ENCODE measurements at regions of chr6 and their contacts with region 1.

Region 1: GRCh38 chr6:132813173-132813856 is 1.1 kb upstream of the RPS12 start:
- DNase-seq: peak; percentile 67
- H3K4me3 Mint-ChIP-seq: peak overlapping the region; percentile 96
- H3K27ac Mint-ChIP-seq: peak overlapping the region; percentile 99
- H3K4me1 Mint-ChIP-seq: peaks cover 25% of the 10 kb centered on the region
- H3K27me3 Mint-ChIP-seq: no peaks in the 10 kb centered on the region
- CTCF ChIP-seq: no peak

Region 2: DNA sequence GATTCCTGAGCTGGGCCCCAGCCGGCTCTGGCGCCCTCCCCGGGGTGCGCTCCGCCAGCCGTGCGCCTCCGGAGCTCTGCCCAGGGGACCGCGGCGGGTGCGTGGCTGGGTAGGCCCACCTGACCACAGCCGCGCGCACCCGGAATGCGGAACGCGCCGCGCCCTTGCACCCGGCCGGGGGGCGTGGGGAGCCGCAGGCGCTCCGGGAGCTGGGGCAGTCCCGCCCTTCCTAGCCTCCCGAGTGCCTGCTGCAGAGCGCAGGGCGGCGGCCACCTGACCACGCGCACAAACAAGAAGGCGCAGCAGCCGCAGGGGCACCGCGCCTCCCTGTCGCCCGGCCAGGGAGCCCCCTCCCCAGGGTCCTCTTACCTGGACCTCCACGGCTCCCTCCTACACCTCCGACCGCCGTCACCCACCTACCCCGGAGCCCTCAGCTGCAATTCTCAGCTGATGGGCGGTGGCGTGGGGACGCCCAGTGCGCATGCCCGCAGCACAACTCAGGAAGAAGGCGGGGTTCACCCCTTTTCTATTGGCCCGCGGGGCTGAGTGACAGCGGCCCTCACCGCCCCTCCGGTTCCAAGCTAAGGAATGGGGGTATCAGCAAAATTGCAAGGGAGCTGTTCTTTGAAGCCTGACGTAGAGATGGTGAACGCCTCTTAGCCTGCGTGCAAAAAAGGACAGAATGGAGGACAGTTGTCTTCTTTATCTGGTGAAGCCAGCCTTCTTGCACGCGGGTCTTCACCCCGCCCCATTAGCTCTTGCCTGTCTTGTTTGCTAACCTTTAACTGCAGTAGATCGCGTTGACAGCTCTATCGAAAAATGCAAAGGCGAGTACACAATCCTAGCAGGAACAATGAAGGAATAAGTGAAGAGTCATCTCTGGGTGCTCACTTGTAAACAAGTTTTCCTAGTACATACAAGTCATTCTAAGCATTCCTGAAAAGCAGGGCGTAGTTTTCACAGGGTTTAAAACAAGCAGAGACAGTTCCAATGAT is 300.4 kb before region 1 on chr6 and contains the start of gene STX7:
- CTCF ChIA-PET with region 1: no interaction called
- POLR2A ChIA-PET with region 1: interaction called, 66 read pairs
- intact Hi-C with region 1: no loop called
- DNase-seq: peak; percentile 90
- H3K4me3 Mint-ChIP-seq: peak within 1 kb of the TSS; percentile 92
- H3K27ac Mint-ChIP-seq: peak within 1 kb of the TSS; percentile 82
- H3K4me1 Mint-ChIP-seq: peaks cover 27% of the 10 kb centered on the region
- H3K27me3 Mint-ChIP-seq: no peaks in the 10 kb centered on the region
- CTCF ChIP-seq: no peak
- total RNA-seq, gene STX7: 31.3 and 33.0 TPM in 2 replicates

Region 3: DNA sequence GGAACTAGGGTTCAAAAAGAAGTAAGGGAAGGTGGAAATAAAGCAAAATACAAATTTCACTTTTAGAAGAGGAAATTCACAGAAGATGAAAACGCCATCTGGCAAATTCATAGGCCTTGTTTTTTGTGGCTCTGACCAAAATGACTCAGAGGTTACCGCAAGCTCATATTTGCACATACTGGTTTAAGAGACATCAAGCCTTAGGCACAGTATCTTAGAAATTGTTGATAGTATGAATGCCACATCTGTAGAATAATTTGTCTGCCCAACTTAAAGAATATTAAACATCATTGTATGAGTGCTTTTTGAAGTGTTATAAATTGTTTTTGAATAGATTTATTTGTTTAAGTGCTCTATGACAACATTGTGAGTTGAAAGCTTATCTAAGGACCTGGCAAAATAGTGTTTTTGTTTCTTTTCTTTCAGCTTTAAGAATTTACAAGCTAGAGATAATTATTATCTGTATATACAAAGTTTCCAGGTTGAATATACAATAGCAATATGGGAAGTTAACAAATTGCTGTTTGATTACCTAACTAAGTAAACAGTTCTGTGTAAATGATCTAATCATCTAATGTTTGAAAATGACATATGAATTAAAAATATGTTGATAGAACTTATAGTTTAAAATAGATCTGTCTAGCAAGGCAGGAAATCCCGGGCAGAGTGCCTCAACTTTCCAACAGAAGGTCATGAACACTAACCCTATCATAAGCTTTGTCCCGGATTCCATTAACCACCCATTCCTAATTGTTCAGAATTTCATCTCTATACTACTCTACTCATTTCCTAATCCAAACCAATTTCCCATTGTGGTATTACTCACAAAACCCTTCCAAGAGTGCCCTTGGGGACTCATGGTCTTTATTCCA is 164.7 kb before region 1 on chr6:
- CTCF ChIA-PET with region 1: no interaction called
- POLR2A ChIA-PET with region 1: interaction called, 10 read pairs
- intact Hi-C with region 1: no loop called
- DNase-seq: peak; percentile 74
- H3K4me3 Mint-ChIP-seq: no peak overlapping the region
- H3K27ac Mint-ChIP-seq: no peak overlapping the region
- H3K4me1 Mint-ChIP-seq: no peaks in the 10 kb centered on the region
- H3K27me3 Mint-ChIP-seq: no peaks in the 10 kb centered on the region
- CTCF ChIP-seq: no peak

Region 4: GRCh38 chr6:132683543-132683942 is 129.8 kb before region 1 on chr6:
- CTCF ChIA-PET with region 1: interaction called, 4 read pairs
- POLR2A ChIA-PET with region 1: interaction called, 34 read pairs
- intact Hi-C with region 1: no loop called
- DNase-seq: peak; percentile 85
- H3K4me3 Mint-ChIP-seq: peak overlapping the region; percentile 66
- H3K27ac Mint-ChIP-seq: peak overlapping the region; percentile 95
- H3K4me1 Mint-ChIP-seq: peaks cover 28% of the 10 kb centered on the region
- H3K27me3 Mint-ChIP-seq: no peaks in the 10 kb centered on the region
- CTCF ChIP-seq: no peak

Region 5: DNA sequence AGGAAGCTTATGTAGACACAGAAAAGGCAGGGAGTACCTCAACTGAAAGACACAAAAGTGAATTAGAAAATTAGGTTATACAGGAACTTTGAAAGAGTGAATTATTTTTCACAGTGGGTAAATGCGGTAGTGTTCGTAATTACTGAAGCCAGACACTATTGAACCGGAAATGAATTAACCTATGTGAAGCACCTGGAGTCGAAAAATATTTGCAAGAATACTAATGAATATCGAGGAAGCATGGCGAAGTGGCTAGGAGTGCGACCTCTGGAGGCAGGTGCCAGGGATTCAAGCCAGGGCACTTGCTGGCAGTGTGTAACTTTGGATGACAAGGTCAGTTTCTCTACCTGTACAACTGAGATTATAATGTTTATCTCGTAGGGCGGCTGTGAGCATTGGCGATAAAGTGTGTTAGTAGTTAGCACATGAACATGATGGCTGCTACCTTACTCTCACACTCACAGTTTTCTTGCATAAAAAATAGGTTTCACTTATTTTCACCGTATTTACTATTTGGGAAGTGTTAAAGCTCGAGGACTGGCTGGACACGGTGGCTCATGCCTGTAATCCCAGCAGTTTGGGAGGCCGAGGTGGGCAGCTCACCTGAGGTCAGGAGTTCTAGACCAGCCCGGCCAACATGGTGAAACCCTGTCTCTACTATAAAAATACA is 14.3 kb before region 1 on chr6:
- CTCF ChIA-PET with region 1: interaction called, 68 read pairs
- POLR2A ChIA-PET with region 1: interaction called, 217 read pairs
- intact Hi-C with region 1: loop called (anchors 1 kb)
- DNase-seq: peak; percentile 85
- H3K4me3 Mint-ChIP-seq: peak overlapping the region; percentile 94
- H3K27ac Mint-ChIP-seq: no peak overlapping the region
- H3K4me1 Mint-ChIP-seq: peaks cover 11% of the 10 kb centered on the region
- H3K27me3 Mint-ChIP-seq: no peaks in the 10 kb centered on the region
- CTCF ChIP-seq: peak; percentile 64

Region 6: GRCh38 chr6:132858750-132859149 is 45.4 kb after region 1 on chr6:
- CTCF ChIA-PET with region 1: no interaction called
- POLR2A ChIA-PET with region 1: no interaction called
- intact Hi-C with region 1: no loop called
- DNase-seq: no peak
- H3K4me3 Mint-ChIP-seq: no peak overlapping the region
- H3K27ac Mint-ChIP-seq: no peak overlapping the region
- H3K4me1 Mint-ChIP-seq: no peaks in the 10 kb centered on the region
- H3K27me3 Mint-ChIP-seq: no peaks in the 10 kb centered on the region
- CTCF ChIP-seq: no peak

Region 7: DNA sequence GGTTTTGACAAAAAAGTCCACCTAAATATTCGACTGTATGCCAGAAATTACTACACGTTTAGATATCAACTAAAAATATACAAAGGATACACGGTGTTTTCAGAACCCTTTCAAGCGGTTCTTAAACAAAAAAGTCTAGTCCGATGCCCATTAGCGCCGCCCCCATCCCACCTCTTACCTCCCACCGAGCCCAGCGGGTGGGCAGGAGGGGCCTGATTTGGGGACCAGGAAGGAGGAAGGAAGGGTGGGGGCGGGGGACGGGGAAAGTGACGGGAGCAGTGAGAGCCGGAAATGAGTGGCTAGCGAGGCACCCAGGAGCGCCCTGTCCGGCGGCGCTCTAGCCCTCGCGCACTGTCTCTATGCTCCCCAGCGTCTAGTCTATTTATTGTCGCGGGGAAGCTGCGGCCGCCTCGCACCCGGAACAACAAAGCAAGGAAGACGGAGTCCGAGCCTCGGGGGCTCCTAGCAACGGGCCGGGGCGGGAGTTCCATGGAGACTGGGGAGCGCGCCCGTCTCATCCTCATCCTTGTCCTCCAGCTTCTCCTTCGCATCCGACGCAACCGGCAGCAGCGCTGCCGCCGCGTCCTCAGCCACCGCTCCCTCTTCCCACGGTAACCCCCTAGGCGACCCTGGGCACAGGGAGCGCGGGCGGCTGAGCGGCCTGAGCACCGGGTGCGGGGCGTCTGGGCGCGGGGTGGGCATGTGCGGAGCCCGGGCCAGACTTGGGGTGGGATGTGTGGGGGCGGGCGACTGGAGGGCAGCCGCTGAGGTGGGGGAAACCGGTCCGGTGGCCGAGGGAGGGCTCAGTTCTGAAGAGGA is 1139.7 kb after region 1 on chr6 and contains the start of gene TBPL1:
- CTCF ChIA-PET with region 1: no interaction called
- POLR2A ChIA-PET with region 1: interaction called, 13 read pairs
- intact Hi-C with region 1: no loop called
- DNase-seq: peak; percentile 95
- H3K4me3 Mint-ChIP-seq: peak within 1 kb of the TSS; percentile 94
- H3K27ac Mint-ChIP-seq: peak within 1 kb of the TSS; percentile 88
- H3K4me1 Mint-ChIP-seq: peaks cover 36% of the 10 kb centered on the region
- H3K27me3 Mint-ChIP-seq: no peaks in the 10 kb centered on the region
- CTCF ChIP-seq: no peak
- total RNA-seq, gene TBPL1: 40.9 and 51.8 TPM in 2 replicates